Activated naive CD4-positive, alpha-beta T cell treated with anti-CD3 and anti-CD28 coated beads for 36 hours (primary cell): ENCODE measurements at regions of chr1 and their contacts with region 1.

Region 1: DNA sequence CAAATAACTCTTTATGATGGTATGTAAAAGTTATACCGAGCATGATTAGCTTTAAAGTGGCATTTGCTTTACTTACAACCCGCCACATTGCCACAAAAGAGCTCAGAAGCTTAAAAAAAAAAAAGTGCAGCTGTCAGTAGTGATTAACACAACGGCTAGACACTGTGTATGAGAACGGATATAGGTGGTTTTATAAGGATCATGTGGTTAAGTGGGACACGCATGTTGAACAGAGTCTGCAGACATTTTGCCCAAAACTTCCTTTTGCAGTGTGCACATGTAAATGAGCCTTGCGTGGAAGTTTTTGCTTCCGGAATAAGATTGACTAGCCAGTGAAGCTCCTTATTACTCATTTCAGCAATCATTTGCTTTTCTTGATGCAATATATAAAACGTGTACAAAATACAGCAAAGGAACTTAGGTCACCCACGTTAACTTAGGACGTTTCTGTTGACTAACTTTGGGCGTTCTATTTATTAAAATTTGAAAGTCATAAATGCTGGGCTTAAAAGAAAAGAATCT is 58.7 kb upstream of the RGS1 start:
- DNase-seq: peak; percentile 76
- H3K4me3 Mint-ChIP-seq: peak overlapping the region; percentile 66
- H3K27ac Mint-ChIP-seq: peak overlapping the region; percentile 79
- H3K4me1 Mint-ChIP-seq: peaks cover 53% of the 10 kb centered on the region
- H3K27me3 Mint-ChIP-seq: no peaks in the 10 kb centered on the region

Region 2: GRCh38 chr1:192530254-192530653 is 13.4 kb after region 1 on chr1:
- CTCF ChIA-PET with region 1: no interaction called
- intact Hi-C with region 1: loop called (anchors 1 kb)
- DNase-seq: no peak
- H3K4me3 Mint-ChIP-seq: no peak overlapping the region
- H3K27ac Mint-ChIP-seq: no peak overlapping the region
- H3K4me1 Mint-ChIP-seq: peaks cover 20% of the 10 kb centered on the region
- H3K27me3 Mint-ChIP-seq: no peaks in the 10 kb centered on the region

Region 3: DNA sequence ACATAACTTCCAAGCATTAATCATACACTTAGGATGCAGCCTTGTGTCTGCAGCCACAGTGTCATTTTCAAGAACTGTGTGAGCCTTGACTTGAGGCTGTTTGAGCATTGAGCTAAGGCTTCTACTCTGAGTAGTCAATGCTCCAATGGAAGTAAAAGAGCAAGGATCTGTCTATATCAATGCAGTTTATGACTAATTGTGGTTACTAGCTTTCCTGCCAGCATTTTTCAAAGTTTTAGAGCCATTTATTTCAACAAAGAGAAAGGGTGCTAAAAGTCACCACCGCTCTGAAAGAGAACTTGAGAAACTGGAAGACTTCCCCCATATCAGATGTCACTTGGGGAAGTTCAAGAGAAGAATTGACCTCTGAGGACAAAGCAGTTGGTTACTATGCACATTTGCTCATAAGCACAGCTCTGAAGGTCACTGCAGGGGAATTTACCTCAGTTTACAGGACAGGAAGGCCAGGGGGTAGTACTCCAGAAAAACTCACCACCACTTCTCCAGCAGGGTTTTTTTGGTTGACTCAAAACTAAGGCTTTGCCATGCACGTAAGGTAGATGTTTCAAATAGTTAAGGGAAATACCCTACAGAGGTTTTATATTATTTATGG is 34.2 kb after region 1 on chr1:
- CTCF ChIA-PET with region 1: no interaction called
- intact Hi-C with region 1: loop called (anchors 1 kb)
- DNase-seq: peak; percentile 34
- H3K4me3 Mint-ChIP-seq: no peak overlapping the region
- H3K27ac Mint-ChIP-seq: peak overlapping the region; percentile 53
- H3K4me1 Mint-ChIP-seq: peaks cover 29% of the 10 kb centered on the region
- H3K27me3 Mint-ChIP-seq: no peaks in the 10 kb centered on the region

Region 4: GRCh38 chr1:192609110-192610079 is 92.6 kb after region 1 on chr1:
- CTCF ChIA-PET with region 1: interaction called, 3 read pairs
- intact Hi-C with region 1: loop called (anchors 2 kb)
- DNase-seq: peak; percentile 79
- H3K4me3 Mint-ChIP-seq: peak overlapping the region; percentile 30
- H3K27ac Mint-ChIP-seq: no peak overlapping the region
- H3K4me1 Mint-ChIP-seq: peaks cover 14% of the 10 kb centered on the region
- H3K27me3 Mint-ChIP-seq: no peaks in the 10 kb centered on the region

Region 5: GRCh38 chr1:193417945-193418744 is 901.3 kb after region 1 on chr1:
- CTCF ChIA-PET with region 1: no interaction called
- intact Hi-C with region 1: loop called (anchors 10 kb)
- DNase-seq: no peak
- H3K4me3 Mint-ChIP-seq: peak overlapping the region; percentile 52
- H3K27ac Mint-ChIP-seq: peak overlapping the region; percentile 39
- H3K4me1 Mint-ChIP-seq: peaks cover 46% of the 10 kb centered on the region
- H3K27me3 Mint-ChIP-seq: no peaks in the 10 kb centered on the region

Region 6: DNA sequence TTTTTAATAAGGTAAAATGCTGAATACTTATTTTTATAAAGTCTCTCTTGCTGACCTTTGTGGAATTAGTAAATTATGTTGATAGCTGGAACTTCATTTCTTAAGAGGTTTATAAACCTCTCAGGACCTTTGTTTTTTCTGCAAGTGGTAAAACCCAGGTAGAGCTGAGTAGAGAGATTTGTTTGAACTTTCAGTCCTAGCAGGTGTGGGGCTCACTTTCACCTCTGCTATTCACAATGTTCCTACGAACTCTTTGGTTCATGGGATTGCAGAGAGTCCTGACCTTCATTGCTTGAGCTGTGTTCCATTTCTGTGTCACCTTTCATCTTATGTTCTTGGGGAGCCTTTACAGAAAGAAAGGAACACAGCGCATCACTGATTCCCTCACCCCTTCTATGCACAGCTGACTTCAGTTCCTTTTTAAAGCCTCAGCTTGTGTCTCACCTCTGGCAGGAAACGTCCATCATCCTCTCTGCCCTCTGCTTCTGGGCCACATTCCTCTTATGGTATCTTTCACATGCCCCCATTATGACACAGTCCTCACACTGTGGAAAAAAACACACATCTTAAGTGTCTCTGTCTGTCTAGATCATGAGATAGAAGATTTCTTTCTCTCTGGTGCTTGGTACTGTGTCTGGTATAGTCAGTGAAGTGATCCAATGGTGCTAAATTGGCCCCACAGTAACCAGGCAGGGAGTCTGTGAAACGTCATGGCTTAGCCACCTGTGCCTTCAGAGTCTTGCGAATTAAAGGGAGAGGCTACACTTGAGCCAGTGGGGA is 932.0 kb after region 1 on chr1:
- CTCF ChIA-PET with region 1: no interaction called
- intact Hi-C with region 1: no loop called
- DNase-seq: peak; percentile 32
- H3K4me3 Mint-ChIP-seq: no peak overlapping the region
- H3K27ac Mint-ChIP-seq: peak overlapping the region; percentile 18
- H3K4me1 Mint-ChIP-seq: peaks cover 14% of the 10 kb centered on the region
- H3K27me3 Mint-ChIP-seq: no peaks in the 10 kb centered on the region